IMR-90 (cell line): ENCODE measurements at regions of chrX and their contacts with region 1.

Region 1: DNA sequence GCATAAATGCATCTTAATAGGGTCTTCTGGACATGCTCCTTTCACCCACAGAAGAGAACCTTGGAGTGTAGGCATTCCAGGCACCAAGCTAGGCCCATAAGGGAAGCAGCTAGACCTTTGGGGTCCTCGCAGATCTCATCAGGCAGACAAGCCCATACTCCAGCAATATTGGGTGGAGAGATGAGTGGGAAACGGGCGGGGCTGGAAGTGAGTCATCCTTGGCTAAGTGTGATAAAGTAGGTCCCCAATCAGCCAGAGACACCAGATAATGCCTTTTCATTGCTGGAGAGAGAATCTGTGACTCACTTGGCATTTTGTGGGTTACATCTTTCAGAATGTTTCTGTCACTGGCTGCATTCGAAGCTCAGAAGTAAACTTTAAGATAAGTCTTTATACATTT is 133.3 kb upstream of the MBNL3 start:
- DNase-seq: peak; percentile 35
- ATAC-seq: peak; percentile 57
- H3K4me3 ChIP-seq: no peak overlapping the region
- H3K27ac ChIP-seq: no peak overlapping the region
- H3K4me1 ChIP-seq: peaks cover 1% of the 10 kb centered on the region; the same call in 1 of the 2 replicates
- H3K27me3 ChIP-seq: peaks cover 8% of the 10 kb centered on the region
- CTCF ChIP-seq: no peak
- POLR2A ChIP-seq: no peak
- RAD21 ChIP-seq: no peak

Region 2: GRCh38 chrX:131734621-131735020 is 887.5 kb before region 1 on chrX:
- CTCF ChIA-PET with region 1: no interaction called
- POLR2A ChIA-PET with region 1: no interaction called
- dilution Hi-C with region 1: no loop called
- in situ Hi-C with region 1: no loop called
- intact Hi-C with region 1: loop called (anchors 10 kb)
- DNase-seq: peak; percentile 81
- ATAC-seq: no peak; the same call in 1 of the 2 replicates
- H3K4me3 ChIP-seq: peak overlapping the region; percentile 3; the same call in 1 of the 2 replicates
- H3K27ac ChIP-seq: no peak overlapping the region
- H3K4me1 ChIP-seq: no peaks in the 10 kb centered on the region
- H3K27me3 ChIP-seq: no peaks in the 10 kb centered on the region; the same call in 1 of the 2 replicates
- CTCF ChIP-seq: peak; percentile 44
- POLR2A ChIP-seq: no peak
- RAD21 ChIP-seq: peak; percentile 63

Region 3: DNA sequence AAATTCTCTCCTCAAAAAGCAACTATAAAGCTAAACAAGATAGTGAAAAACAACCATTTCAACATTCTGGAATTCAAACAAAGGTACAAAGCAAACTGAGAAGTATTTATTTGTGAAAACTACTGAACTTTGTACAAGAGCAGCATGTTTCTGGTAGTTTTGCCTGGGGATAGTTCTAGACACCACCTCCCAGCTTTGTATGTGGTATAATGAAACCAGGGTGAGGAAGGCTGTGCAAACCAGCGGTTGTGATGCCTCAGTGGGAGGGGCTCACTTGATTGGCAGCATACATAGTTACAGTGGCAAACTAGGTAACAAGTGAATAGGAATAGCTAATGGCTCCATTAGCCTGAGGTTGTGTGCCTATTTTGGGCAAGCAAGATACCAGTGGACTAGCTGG is 475.7 kb before region 1 on chrX:
- CTCF ChIA-PET with region 1: no interaction called
- POLR2A ChIA-PET with region 1: no interaction called
- dilution Hi-C with region 1: no loop called
- in situ Hi-C with region 1: no loop called
- intact Hi-C with region 1: no loop called
- DNase-seq: no peak
- ATAC-seq: no peak
- H3K4me3 ChIP-seq: no peak overlapping the region
- H3K27ac ChIP-seq: no peak overlapping the region
- H3K4me1 ChIP-seq: no peaks in the 10 kb centered on the region
- H3K27me3 ChIP-seq: no peaks in the 10 kb centered on the region; the same call in none of the 2 replicates
- CTCF ChIP-seq: no peak
- POLR2A ChIP-seq: no peak
- RAD21 ChIP-seq: no peak

Region 4: GRCh38 chrX:132716006-132716405 is 93.9 kb after region 1 on chrX:
- CTCF ChIA-PET with region 1: no interaction called
- POLR2A ChIA-PET with region 1: no interaction called
- dilution Hi-C with region 1: no loop called
- in situ Hi-C with region 1: no loop called
- intact Hi-C with region 1: no loop called
- DNase-seq: no peak
- ATAC-seq: no peak
- H3K4me3 ChIP-seq: no peak overlapping the region
- H3K27ac ChIP-seq: no peak overlapping the region
- H3K4me1 ChIP-seq: no peaks in the 10 kb centered on the region
- H3K27me3 ChIP-seq: no peaks in the 10 kb centered on the region; the same call in none of the 2 replicates
- CTCF ChIP-seq: no peak
- POLR2A ChIP-seq: no peak
- RAD21 ChIP-seq: no peak